ENCODE measurements at regions of chr10 and their contacts with region 1.

Region 1: DNA sequence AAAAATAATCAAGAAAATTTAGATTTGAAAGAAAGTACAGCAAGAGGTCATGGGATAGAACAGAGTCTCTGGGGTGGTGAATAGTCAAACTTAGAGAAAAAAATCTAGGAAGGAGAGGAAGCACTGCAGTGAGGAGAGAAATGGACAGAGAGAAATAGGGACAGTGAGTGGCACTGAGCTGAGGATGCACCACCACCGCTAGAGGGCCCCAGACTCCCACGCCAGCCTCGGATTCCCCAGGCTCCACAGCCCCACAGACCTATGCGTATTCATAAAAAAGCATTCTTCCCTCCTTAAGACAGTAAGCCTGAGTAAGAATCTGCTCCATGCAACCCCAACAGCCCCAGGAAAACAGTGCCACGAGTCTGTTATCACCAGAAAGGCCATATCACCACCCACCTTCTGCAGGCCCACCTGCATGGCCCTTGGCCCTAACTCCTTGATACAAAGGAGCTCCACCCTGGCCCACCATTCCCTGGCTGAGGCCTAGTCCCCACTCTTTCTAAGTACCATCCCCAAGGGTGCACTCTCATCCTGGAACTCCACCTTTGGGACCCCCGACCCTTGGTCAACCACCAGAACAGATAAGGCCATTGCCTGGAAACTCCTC is 91.0 kb downstream of the ALOX5 start:
- DNase-seq: peak; percentile 51
- ATAC-seq: peak; percentile 82
- H3K4me3 ChIP-seq: peak overlapping the region; percentile 40; the same call in 1 of the 2 replicates
- H3K27ac ChIP-seq: peak overlapping the region; percentile 60
- H3K4me1 ChIP-seq: peaks cover 51% of the 10 kb centered on the region
- H3K27me3 ChIP-seq: no peaks in the 10 kb centered on the region
- CTCF ChIP-seq: peak; percentile 96 to 98 (median 97); a peak in 5 of 6 replicates
- EP300 ChIP-seq: no peak
- POLR2A ChIP-seq: no peak
- RAD21 ChIP-seq: peak; percentile 93

Region 2: DNA sequence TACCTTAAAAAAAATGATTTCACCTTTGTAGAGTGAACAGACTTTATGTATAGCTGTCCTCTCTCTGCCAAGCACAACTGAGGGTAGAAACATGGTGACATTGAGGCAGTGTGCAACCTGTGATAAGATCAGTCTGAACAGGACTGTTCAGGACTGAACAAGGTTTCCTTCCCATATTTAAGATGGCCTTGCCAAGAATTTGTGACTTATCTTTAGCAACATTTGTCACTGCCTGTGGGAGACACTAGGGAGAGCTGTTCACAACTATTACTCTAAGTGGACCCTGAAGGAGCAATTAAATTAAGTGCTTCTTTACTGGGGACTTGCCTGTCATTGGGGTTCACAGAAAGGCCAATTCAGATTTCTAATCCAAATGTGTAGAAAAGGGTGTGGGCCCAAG is 156.4 kb before region 1 on chr10:
- CTCF ChIA-PET with region 1: interaction called, 3 read pairs
- POLR2A ChIA-PET with region 1: no interaction called
- RAD21 ChIA-PET with region 1: interaction called, 6 read pairs
- SMC1A ChIA-PET with region 1: interaction called, 4 read pairs
- in situ Hi-C with region 1: no loop called
- intact Hi-C with region 1: loop called (anchors 5 kb)
- DNase-seq: peak; percentile 16
- ATAC-seq: peak; percentile 69
- H3K4me3 ChIP-seq: no peak overlapping the region
- H3K27ac ChIP-seq: no peak overlapping the region
- H3K4me1 ChIP-seq: no peaks in the 10 kb centered on the region
- H3K27me3 ChIP-seq: no peaks in the 10 kb centered on the region
- CTCF ChIP-seq: peak; percentile 45 to 57 (median 55); a peak in 5 of 6 replicates
- EP300 ChIP-seq: no peak
- POLR2A ChIP-seq: no peak
- RAD21 ChIP-seq: peak; percentile 69

Region 3: DNA sequence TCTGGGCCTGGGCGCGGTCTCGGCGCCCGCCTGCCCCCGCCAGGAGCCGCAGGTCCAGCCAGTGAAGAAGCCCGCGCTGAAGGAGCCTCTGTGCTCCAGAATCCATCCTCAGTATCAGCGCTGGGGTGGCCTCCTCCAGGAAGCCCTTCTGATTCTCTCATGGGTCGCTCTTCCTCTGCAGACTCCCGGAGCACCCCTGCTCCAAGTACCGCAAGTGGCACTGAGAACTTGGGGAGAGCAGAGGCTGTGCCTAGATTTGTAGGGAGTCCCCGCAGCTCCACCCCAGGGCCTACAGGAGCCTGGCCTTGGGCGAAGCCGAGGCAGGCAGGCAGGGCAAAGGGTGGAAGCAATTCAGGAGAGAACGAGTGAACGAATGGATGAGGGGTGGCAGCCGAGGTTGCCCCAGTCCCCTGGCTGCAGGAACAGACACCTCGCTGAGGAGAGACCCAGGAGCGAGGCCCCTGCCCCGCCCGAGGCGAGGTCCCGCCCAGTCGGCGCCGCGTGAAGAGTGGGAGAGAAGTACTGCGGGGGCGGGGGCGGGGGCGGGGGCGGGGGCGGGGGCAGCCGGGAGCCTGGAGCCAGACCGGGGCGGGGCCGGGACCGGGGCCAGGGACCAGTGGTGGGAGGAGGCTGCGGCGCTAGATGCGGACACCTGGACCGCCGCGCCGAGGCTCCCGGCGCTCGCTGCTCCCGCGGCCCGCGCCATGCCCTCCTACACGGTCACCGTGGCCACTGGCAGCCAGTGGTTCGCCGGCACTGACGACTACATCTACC is 91.3 kb before region 1 on chr10 and contains the start of gene ALOX5:
- CTCF ChIA-PET with region 1: no interaction called
- POLR2A ChIA-PET with region 1: no interaction called
- RAD21 ChIA-PET with region 1: interaction called, 7 read pairs
- SMC1A ChIA-PET with region 1: interaction called, 14 read pairs
- in situ Hi-C with region 1: no loop called
- intact Hi-C with region 1: loop called (anchors 2 kb)
- DNase-seq: no peak
- ATAC-seq: peak; percentile 63
- H3K4me3 ChIP-seq: peak within 1 kb of the TSS; percentile 81
- H3K27ac ChIP-seq: peak within 1 kb of the TSS; percentile 74
- H3K4me1 ChIP-seq: peaks cover 33% of the 10 kb centered on the region
- H3K27me3 ChIP-seq: no peaks in the 10 kb centered on the region
- CTCF ChIP-seq: no peak
- EP300 ChIP-seq: no peak
- POLR2A ChIP-seq: peak; percentile 49
- RAD21 ChIP-seq: no peak
- polyA plus RNA-seq, gene ALOX5: 3.3 to 6.5 TPM

Region 4: DNA sequence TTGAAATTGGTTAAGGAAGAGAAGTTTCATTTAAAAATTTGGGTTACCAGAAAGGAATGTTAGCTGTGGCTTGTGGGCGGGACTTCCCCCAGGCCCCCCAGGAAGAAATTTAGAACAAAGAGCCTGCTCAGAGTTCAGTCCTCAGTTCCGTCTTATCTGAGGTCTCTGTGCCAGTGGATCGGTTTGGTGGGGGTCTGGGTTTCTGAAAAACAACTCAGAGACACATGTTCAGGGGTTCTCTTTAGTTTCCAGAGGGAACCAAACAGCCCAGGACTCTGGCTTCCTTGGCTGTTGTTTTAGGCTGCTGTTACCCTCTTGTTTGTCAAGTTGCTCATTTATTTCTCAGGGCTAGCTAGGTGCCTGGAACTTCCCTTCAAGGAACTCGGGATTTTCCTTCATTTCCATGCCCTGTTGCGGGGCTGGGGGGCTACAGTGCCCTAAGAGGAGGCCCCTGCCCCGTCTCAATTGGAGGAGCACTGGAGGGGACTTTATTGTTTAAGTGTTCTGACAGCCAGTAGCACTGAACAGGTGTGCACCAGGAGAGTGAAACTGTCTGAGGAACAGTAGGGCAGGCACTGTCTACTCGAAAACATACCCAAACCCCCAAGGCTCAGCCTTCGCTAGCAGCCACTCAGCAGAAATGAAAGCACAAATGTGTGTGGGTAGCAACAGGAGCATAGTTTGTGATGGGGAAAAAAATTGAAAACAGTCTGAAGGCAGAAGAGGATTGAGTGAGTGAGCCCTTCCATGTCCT is 31.2 kb before region 1 on chr10:
- CTCF ChIA-PET with region 1: interaction called, 7 read pairs
- POLR2A ChIA-PET with region 1: interaction called, 3 read pairs
- RAD21 ChIA-PET with region 1: interaction called, 22 read pairs
- SMC1A ChIA-PET with region 1: interaction called, 28 read pairs
- in situ Hi-C with region 1: no loop called
- intact Hi-C with region 1: no loop called
- DNase-seq: peak; percentile 70
- ATAC-seq: peak; percentile 96
- H3K4me3 ChIP-seq: peak overlapping the region; percentile 33; the same call in 1 of the 2 replicates
- H3K27ac ChIP-seq: peak overlapping the region; percentile 79
- H3K4me1 ChIP-seq: peaks cover 24% of the 10 kb centered on the region
- H3K27me3 ChIP-seq: no peaks in the 10 kb centered on the region
- CTCF ChIP-seq: no peak
- EP300 ChIP-seq: no peak
- POLR2A ChIP-seq: no peak
- RAD21 ChIP-seq: no peak

Region 5: DNA sequence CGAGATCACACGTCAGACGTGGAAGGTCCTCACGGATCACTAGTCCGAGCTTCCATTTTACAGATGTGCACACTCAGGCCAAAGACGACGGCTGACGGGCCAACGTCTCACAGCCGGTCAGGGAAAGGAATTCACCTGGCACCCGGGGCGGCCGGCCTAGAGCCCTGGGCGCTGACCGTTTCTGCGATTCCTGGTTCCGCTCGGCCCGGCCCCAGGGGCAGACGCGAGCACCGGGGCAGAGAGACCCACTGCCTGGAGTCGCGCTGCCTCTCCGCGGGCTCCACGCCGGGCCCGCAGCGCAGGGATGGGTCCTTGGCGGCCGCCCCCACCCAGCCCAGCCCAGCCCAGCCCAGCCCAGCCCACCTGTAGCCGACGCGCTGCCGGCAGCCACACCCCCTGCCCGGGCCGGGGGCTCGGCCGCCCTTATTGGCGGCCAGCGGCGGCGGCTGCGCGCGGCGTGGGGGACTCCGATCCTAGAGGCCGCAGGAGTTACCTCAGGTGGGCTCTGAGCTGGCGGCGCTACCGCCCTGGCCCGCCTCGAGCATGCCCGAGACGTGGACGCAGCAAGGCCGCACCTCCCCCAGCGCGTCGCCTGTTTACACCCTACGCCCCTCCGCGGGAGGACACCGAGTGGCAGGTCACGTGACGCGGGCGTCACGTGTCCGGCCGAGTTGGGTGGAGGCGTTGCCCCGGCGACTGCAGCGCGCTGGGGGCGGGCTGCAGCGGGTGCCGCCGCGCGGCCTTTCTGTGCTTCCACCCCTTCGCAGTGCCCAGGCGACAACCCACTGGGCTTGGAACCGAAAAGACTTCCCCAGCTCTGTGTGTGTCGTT is 129.4 kb after region 1 on chr10:
- CTCF ChIA-PET with region 1: interaction called, 4 read pairs
- POLR2A ChIA-PET with region 1: no interaction called
- RAD21 ChIA-PET with region 1: interaction called, 5 read pairs
- SMC1A ChIA-PET with region 1: interaction called, 7 read pairs
- in situ Hi-C with region 1: no loop called
- intact Hi-C with region 1: loop called (anchors 5 kb)
- DNase-seq: peak; percentile 53
- ATAC-seq: peak; percentile 95
- H3K4me3 ChIP-seq: peak overlapping the region; percentile 74
- H3K27ac ChIP-seq: peak overlapping the region; percentile 71
- H3K4me1 ChIP-seq: peaks cover 3% of the 10 kb centered on the region; the same call in 1 of the 2 replicates
- H3K27me3 ChIP-seq: no peaks in the 10 kb centered on the region
- CTCF ChIP-seq: peak in 2 of 3 experiments; percentile 11 to 29; a peak in 2 of 6 replicates
- EP300 ChIP-seq: peak; percentile 19 to 49; a peak in 2 of 4 replicates
- POLR2A ChIP-seq: peak; percentile 84
- RAD21 ChIP-seq: 0 out of 2 replicates have a peak, but pooled peaks have one; percentile 10

Region 6: DNA sequence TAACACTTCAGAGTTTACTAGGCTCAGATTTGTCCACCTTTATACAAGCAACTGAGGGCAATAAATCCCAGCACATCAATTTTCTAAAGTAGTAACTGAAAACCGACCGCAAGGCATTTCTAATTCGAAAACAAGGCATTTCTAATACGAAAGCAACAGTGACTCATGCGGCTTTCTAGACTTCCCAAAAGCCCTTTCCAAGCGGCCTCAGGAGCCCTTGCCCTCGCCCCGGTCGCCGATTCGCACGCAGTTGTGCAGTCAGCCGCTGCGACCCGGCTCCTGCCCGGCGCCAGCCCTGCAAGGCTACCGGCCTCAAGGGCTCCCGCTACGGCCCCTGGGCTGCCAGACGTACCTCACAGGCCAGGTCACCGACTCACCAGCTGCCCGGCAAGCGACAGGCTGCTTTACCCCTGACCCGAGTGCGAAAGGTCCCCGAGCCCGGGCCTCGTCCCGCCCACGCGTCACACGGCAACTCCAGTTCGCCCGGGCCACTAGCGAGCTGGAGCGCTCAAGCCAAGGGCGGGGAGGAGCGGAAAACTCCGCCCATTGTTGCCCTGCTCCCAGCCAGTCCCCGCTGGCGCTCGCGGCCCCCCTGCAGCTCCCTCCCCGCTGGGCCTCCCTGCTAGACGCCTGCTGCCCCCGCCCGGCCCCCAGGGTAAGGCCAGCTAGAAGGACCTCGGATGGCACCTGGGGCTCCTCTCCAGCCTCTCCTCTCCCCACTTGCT is 558.1 kb after region 1 on chr10:
- CTCF ChIA-PET with region 1: interaction called, 17 read pairs
- POLR2A ChIA-PET with region 1: interaction called, 4 read pairs
- RAD21 ChIA-PET with region 1: interaction called, 4 read pairs
- SMC1A ChIA-PET with region 1: interaction called, 4 read pairs
- in situ Hi-C with region 1: loop called (anchors 5 kb)
- intact Hi-C with region 1: loop called (anchors 10 kb)
- DNase-seq: peak; percentile 56
- ATAC-seq: peak; percentile 97
- H3K4me3 ChIP-seq: peak overlapping the region; percentile 58
- H3K27ac ChIP-seq: peak overlapping the region; percentile 59
- H3K4me1 ChIP-seq: peaks cover 12% of the 10 kb centered on the region
- H3K27me3 ChIP-seq: no peaks in the 10 kb centered on the region
- CTCF ChIP-seq: peak; percentile 22 to 57 (median 56); a peak in 4 of 6 replicates
- EP300 ChIP-seq: no peak
- POLR2A ChIP-seq: peak; percentile 81
- RAD21 ChIP-seq: peak; percentile 30; the same call in 1 of the 2 replicates

Measured in GM12878 (cell line).